Endothelial cell of umbilical vein (primary cell): ENCODE measurements at regions of chr1 and their contacts with region 1.

Region 1: DNA sequence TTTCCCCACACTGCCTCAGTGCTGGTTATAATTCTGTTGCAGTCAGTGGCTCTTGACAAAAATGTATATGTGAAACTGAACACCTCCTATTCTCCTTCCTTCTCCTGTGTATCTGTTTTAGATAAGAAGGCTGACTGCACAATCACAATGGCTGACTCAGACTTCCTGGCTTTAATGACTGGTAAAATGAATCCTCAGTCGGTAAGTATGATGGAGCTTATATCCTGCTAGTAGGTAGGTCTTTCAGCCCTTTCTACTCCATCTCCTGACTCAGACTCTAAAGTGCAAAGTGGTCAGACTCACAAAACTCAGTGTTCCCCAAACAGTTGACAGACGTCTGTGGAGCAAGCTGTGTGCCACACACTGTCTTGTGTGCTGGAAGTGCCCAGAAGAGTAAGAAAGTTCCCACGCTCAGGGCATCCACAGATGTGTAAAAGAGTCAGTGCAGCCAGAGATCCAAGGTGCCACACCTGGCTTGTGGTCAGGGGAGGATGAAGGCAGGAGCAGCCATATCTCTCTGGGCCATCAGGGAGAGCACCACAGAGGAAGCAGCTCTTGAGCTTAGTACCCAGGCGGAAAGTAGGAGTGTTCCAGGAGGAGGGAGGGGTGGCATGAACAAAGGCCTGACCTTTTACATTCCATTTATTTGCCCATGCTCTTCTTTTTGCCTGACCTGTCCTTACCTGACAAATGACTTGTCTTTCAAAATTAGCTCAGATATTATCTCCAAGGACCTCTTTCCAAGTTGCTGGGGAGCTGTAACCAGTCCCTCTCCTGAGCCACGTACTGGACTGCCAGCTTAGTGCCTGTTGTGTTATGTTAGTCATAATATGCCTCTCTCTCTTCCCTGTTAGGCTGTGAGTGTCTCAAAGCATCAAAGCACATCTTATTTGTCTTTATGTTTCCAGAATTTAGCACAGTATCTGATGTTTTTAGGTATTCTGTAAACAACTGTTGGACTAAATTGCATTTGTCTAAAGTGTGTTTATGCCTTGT is 14.0 kb upstream of the PODN start:
- DNase-seq: peak; percentile 94
- H3K4me3 ChIP-seq: peak overlapping the region in 1 of 3 experiments; percentile 14
- H3K27ac ChIP-seq: peak overlapping the region; percentile 95
- H3K4me1 ChIP-seq: peaks cover 46% of the 10 kb centered on the region
- H3K27me3 ChIP-seq: no peaks in the 10 kb centered on the region
- CTCF ChIP-seq: no peak
- POLR2A ChIP-seq: no peak

Region 2: GRCh38 chr1:52702886-52703787 is 344.9 kb before region 1 on chr1:
- CTCF ChIA-PET with region 1: no interaction called
- POLR2A ChIA-PET with region 1: no interaction called
- dilution Hi-C with region 1: no loop called
- intact Hi-C with region 1: loop called (anchors 5 kb)
- DNase-seq: peak; percentile 89
- H3K4me3 ChIP-seq: peak overlapping the region; percentile 15 to 48 (median 32)
- H3K27ac ChIP-seq: peak overlapping the region; percentile 2
- H3K4me1 ChIP-seq: peaks cover 8% of the 10 kb centered on the region
- H3K27me3 ChIP-seq: peaks cover 0 to 9% of the 10 kb centered on the region in 2 experiments
- CTCF ChIP-seq: no peak
- POLR2A ChIP-seq: peak; percentile 54

Region 3: DNA sequence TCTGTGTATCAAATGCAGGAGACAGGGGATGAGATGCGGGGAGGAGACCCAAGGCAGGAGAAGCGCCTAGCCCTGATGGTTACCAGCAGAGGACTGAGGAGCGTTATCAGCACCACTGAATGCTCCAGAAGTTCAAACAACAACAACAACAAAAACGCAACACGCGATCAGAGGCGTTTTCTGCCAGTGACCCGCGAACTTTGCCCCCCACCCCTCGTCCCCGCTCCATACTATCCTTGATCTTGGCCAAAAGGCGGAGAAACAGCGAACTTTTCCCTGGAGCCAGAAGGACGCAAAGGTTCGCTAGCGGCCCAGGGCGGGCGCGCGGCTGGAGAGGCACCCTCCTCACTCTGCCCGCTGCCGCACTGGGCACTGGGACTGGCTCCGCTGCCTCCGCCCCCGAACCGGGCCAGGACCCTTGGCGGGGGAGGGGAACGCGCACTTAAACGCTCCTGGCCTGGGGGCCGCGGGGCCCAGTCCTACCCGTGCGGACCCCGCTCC is 127.2 kb before region 1 on chr1:
- CTCF ChIA-PET with region 1: interaction called, 4 read pairs
- POLR2A ChIA-PET with region 1: no interaction called
- dilution Hi-C with region 1: no loop called
- intact Hi-C with region 1: loop called (anchors 2 kb)
- DNase-seq: peak; percentile 3
- H3K4me3 ChIP-seq: peak overlapping the region; percentile 20 to 56 (median 48)
- H3K27ac ChIP-seq: no peak overlapping the region
- H3K4me1 ChIP-seq: no peaks in the 10 kb centered on the region
- H3K27me3 ChIP-seq: no peaks in the 10 kb centered on the region
- CTCF ChIP-seq: no peak
- POLR2A ChIP-seq: no peak

Region 4: DNA sequence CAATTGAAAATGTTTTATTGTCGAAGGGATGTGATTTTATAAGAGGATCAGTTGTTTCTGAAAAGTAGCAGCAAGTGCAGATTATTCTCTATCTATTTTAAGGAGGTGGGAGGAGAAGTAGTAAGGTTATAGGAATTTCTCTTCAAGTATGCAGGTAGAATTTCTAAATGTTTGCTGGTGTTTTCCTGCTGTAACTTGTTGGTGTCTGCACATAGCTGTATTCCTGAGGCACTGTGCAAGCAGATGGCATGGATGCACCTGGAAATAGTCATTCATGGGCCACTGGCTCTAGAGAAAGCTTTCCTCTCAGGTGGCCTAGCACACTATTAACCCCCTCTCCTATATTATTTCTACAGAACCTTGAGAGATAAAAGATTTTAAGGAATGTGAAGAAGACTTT is 16.3 kb before region 1 on chr1:
- CTCF ChIA-PET with region 1: interaction called, 10 read pairs
- POLR2A ChIA-PET with region 1: no interaction called
- dilution Hi-C with region 1: no loop called
- intact Hi-C with region 1: no loop called
- DNase-seq: no peak
- H3K4me3 ChIP-seq: no peak overlapping the region
- H3K27ac ChIP-seq: no peak overlapping the region
- H3K4me1 ChIP-seq: no peaks in the 10 kb centered on the region
- H3K27me3 ChIP-seq: no peaks in the 10 kb centered on the region
- CTCF ChIP-seq: no peak
- POLR2A ChIP-seq: no peak

Region 5: GRCh38 chr1:53182111-53182593 is 134.1 kb after region 1 on chr1:
- CTCF ChIA-PET with region 1: interaction called, 16 read pairs
- POLR2A ChIA-PET with region 1: no interaction called
- dilution Hi-C with region 1: no loop called
- intact Hi-C with region 1: no loop called
- DNase-seq: peak; percentile 76
- H3K4me3 ChIP-seq: no peak overlapping the region
- H3K27ac ChIP-seq: no peak overlapping the region
- H3K4me1 ChIP-seq: no peaks in the 10 kb centered on the region
- H3K27me3 ChIP-seq: peaks cover 0 to 3% of the 10 kb centered on the region in 2 experiments
- CTCF ChIP-seq: peak; percentile 75 to 89
- POLR2A ChIP-seq: no peak